ENCODE measurements at regions of chr9 and their contacts with region 1.

Region 1: DNA sequence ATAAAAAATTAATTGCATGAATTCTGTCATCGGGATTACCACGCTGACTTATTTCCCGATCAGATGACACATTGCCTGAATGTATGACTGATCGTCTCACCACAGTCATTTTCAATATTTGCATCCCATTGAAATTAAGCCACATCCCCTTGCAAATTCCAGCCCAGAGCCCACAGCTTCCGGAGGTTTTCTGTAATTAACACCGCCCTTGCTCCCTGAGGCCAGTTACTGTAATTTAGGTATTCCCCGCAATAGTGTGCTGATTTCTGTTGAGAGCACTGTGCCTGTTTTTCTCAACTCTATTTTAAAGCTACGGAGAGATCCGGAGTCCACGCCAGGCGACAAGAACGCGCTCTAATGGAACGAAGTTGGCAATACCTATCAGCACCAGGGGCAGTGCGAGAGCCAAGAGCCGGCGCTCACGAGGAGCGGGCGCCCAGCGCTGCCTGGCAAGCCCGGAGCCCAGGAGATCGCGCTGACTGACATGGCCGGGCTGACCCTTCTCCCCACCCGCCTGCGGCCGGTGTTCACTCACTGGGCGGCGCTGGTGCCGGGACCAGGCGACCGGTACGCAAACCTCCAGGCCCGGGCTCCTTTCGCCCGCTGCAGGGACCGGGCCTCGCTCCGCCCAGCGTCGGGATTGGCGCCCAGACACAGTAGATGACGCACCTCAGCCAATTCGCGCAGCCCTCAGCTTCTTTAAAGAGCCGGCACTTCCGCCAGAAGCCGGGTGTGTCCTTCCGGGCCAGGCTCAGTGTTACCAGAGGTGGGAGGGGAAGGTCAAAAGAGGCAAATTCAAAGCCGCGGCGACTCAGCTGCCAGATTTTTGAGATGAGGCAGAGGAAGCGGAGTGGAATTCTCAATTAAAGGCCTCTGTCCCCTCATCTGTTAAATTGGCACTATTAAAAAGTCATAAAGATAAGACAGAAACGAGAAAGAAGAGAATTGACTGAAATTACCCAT is at the start of gene PLGRKT:
- DNase-seq: peak; percentile 91 to 97
- ATAC-seq: peak; percentile 96 to 98
- H3K4me3 ChIP-seq: peak within 1 kb of the TSS; percentile 56 to 93 (median 74)
- H3K27ac ChIP-seq: peak within 1 kb of the TSS; percentile 87 to 97 (median 93)
- H3K4me1 ChIP-seq: peaks cover 14 to 17% of the 10 kb centered on the region in 2 donors
- H3K27me3 ChIP-seq: no peaks in the 10 kb centered on the region
- CTCF ChIP-seq: peak in 2 of 5 experiments; percentile 36 to 49
- POLR2A ChIP-seq: peak; percentile 78 to 86
- total RNA-seq, gene PLGRKT: 12.3 to 38.1 (median 15.1) TPM

Region 2: DNA sequence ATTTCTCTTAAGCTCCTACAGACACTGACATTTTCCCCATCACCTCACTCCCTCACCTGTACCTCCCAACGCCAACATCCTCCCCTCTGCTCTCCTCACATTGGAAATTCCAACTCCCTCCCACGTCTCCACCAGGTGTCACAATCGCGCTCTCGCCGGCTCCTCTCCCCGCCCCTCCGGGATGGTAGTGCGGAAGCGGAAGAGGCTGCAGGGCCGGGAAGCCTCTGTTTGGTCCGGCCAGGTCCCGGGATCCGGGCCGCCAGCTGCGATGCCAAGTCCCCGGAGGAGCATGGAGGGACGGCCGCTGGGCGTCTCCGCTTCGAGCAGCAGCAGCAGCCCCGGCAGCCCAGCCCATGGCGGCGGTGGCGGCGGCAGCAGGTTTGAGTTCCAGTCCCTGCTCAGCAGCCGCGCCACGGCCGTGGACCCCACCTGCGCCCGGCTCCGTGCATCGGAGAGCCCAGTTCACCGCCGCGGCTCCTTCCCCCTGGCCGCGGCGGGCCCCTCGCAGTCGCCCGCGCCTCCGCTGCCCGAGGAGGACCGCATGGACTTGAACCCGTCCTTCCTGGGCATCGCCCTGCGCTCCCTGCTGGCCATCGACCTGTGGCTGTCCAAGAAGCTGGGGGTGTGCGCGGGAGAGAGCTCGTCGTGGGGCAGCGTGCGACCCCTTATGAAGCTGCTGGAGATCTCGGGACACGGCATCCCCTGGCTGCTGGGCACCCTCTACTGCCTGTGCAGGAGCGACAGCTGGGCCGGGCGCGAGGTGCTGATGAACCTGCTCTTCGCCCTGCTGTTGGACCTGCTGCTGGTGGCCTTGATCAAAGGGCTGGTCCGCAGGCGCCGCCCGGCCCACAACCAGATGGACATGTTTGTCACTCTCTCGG is 775.2 kb before region 1 on chr9 and contains the start of gene PLPP6:
- in situ Hi-C with region 1: no loop called
- intact Hi-C with region 1: loop called (anchors 10 kb)
- DNase-seq: peak; percentile 78 to 84
- ATAC-seq: peak; percentile 95 to 96
- H3K4me3 ChIP-seq: peak within 1 kb of the TSS; percentile 66 to 87 (median 76)
- H3K27ac ChIP-seq: peak within 1 kb of the TSS; percentile 70 to 83 (median 77)
- H3K4me1 ChIP-seq: peaks cover 19 to 26% of the 10 kb centered on the region in 2 donors
- H3K27me3 ChIP-seq: no peaks in the 10 kb centered on the region
- CTCF ChIP-seq: peak; percentile 15 to 71 (median 57)
- POLR2A ChIP-seq: peak; percentile 16 to 51
- total RNA-seq, gene PLPP6: 2.5 to 3.1 (median 2.5) TPM

Region 3: GRCh38 chr9:4740638-4741364 is 696.7 kb before region 1 on chr9 and contains the start of gene AK3:
- in situ Hi-C with region 1: no loop called
- intact Hi-C with region 1: loop called (anchors 10 kb)
- DNase-seq: peak; percentile 77 to 80
- ATAC-seq: peak; percentile 77
- H3K4me3 ChIP-seq: peak within 1 kb of the TSS; percentile 83 to 89 (median 86)
- H3K27ac ChIP-seq: peak within 1 kb of the TSS; percentile 87 to 95 (median 92)
- H3K4me1 ChIP-seq: peaks cover 21% of the 10 kb centered on the region in 2 donors
- H3K27me3 ChIP-seq: no peaks in the 10 kb centered on the region
- CTCF ChIP-seq: peak in 4 of 5 experiments; percentile 7 to 48 (median 20)
- POLR2A ChIP-seq: peak; percentile 89
- total RNA-seq, gene AK3: 163 to 270 (median 188) TPM

Region 4: GRCh38 chr9:4792572-4793458 is 644.7 kb before region 1 on chr9 and contains the start of gene RCL1:
- in situ Hi-C with region 1: loop called in 1 of 4 experiments (anchors 25 kb)
- intact Hi-C with region 1: no loop called
- DNase-seq: peak; percentile 93 to 96
- ATAC-seq: peak; percentile 87 to 88
- H3K4me3 ChIP-seq: peak within 1 kb of the TSS; percentile 87 to 99 (median 97)
- H3K27ac ChIP-seq: peak within 1 kb of the TSS; percentile 94 to 100 (median 98)
- H3K4me1 ChIP-seq: peaks cover 31 to 39% of the 10 kb centered on the region in 2 donors
- H3K27me3 ChIP-seq: no peaks in the 10 kb centered on the region
- CTCF ChIP-seq: no peak
- POLR2A ChIP-seq: peak; percentile 96
- total RNA-seq, gene RCL1: 18.8 to 62.4 (median 26.2) TPM

Region 5: DNA sequence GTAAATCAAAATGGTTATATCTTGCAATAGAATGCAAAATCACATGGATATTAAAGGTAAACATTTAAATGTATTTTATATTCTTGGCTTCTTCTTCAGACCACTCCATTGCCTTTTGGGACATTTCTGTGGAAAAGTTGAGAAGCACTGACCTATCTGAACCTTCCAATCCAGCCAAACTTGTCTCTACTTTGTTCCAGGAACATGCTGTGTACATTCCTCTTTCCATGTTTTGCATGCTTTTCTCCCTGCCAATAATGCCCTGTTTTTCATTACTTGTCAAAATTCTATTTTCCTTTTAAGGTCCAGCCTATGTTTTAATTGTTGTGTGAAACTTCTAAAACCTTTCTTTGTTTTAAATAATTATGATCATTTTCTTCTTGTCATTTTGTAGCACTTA is 424.2 kb before region 1 on chr9:
- in situ Hi-C with region 1: loop called in 1 of 4 experiments (anchors 25 kb)
- intact Hi-C with region 1: no loop called
- DNase-seq: no peak
- ATAC-seq: peak; percentile 71 to 76
- H3K4me3 ChIP-seq: no peak overlapping the region
- H3K27ac ChIP-seq: peak overlapping the region in 3 of 4 donors; percentile 13 to 47 (median 44)
- H3K4me1 ChIP-seq: peaks cover 21% of the 10 kb centered on the region in 2 donors
- H3K27me3 ChIP-seq: no peaks in the 10 kb centered on the region
- CTCF ChIP-seq: no peak
- POLR2A ChIP-seq: no peak

Region 6: DNA sequence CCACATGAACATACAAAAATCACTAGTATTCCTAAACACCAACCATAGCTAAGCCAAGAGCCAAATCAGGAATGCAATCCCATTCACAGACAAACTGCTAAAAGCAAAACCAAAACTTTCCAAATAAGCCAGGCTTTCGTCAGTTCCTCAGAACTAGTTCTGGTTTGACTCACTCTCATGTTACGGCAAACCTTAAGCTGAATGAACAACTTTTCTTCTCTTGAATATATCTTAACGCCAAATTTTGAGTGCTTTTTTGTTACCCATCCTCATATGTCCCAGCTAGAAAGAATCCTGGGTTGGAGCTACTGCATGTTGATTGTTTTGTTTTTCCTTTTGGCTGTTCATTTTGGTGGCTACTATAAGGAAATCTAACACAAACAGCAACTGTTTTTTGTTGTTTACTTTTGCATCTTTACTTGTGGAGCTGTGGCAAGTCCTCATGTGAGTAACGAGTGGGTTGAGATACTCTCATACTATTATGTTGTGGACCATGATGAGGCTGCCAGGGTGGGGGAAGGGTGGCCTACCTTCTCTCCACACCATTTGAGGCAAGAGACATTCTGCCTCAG is 72.9 kb after region 1 on chr9 and contains the start of gene PDCD1LG2:
- in situ Hi-C with region 1: no loop called
- intact Hi-C with region 1: loop called (anchors 5 kb)
- DNase-seq: no peak
- ATAC-seq: peak; percentile 37 to 64
- H3K4me3 ChIP-seq: peak within 1 kb of the TSS; percentile 37 to 41 (median 40)
- H3K27ac ChIP-seq: peak within 1 kb of the TSS; percentile 55 to 74 (median 66)
- H3K4me1 ChIP-seq: peaks cover 18 to 27% of the 10 kb centered on the region in 2 donors
- H3K27me3 ChIP-seq: no peaks in the 10 kb centered on the region
- CTCF ChIP-seq: no peak
- POLR2A ChIP-seq: peak in 1 of 2 donors; percentile 20
- total RNA-seq, gene PDCD1LG2: 1.4 to 2.5 (median 1.7) TPM

Measured in gastrocnemius medialis (tissue), 4 donors.